Mammary epithelial cell (primary cell): ENCODE measurements at regions of chr12 and their contacts with region 1.

Region 1: DNA sequence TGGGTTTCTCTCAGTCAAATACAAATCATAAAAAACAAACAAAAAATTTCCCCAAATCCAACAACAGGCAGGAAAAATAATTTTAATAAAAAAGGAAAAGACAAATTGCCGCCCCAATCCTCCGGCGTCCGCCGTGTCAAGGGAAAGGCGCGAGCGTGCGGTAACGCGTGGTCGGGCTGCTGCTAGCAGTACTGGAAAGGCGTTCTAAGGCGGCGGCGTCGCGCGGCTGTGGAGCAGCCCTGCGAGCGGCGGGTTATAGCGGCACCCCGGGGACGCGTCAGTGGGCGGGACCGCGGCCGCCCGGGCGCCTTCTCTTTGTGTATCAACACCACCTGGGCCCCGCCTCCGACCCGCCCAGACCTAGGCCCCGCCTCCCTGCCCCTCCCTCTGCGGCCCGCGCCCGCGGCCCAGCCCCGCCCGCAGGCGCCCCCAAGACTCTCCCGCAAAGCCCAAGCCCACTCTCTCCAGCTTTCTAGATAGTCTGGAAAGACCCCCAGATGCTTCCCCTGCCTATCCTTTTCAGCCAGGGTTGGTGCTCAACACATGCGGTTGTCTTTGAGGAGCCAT is at the start of gene SLC38A2:
- DNase-seq: peak; percentile 91
- H3K4me3 ChIP-seq: peak within 1 kb of the TSS; percentile 91 to 95 (median 92)
- H3K27ac ChIP-seq: peak within 1 kb of the TSS; percentile 98
- H3K4me1 ChIP-seq: peaks cover 27% of the 10 kb centered on the region
- H3K27me3 ChIP-seq: no peaks in the 10 kb centered on the region
- CTCF ChIP-seq: no peak
- total RNA-seq, gene SLC38A2: 774 to 995 TPM

Region 2: DNA sequence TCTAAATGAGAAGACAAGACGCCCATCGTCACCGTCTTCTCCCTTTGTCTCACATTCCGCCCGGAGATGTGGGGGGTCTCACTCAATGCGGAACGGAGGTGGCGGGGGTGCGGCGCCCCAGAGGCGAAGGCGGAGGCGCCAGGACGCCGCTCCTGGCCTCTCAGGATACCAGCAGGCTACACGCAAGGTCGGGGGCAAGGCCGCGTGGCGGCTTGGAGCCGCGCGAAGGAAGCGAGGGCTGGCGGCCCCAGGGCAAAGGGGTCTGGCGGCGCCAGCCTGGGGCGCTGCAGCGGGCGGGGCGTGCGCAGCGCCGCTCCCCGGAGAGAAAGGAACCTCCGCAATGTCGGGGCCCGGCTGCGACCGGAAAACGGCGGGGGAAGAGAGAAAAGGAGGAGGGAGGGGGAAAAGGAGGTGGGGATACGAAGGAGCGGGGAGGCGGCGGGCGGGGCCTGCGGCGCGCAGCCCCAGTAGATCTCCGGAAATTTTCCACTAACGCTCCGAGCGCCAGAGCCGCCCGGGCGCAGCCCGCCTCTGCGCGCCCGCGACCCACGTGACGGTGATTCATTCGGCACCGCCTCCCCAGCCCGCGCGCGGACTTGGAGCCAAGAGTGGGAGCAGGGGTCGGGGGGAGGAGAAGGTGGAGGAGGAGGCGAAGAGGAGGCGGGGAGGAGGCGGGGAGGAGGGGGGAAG is 10.5 kb after region 1 on chr12:
- CTCF ChIA-PET with region 1: no interaction called
- dilution Hi-C with region 1: no loop called
- in situ Hi-C with region 1: no loop called
- intact Hi-C with region 1: loop called (anchors 1 kb)
- DNase-seq: peak; percentile 95
- H3K4me3 ChIP-seq: peak overlapping the region; percentile 60 to 68 (median 64)
- H3K27ac ChIP-seq: peak overlapping the region; percentile 96
- H3K4me1 ChIP-seq: peaks cover 50% of the 10 kb centered on the region
- H3K27me3 ChIP-seq: no peaks in the 10 kb centered on the region
- CTCF ChIP-seq: peak in 1 of 2 donors; percentile 8

Region 3: GRCh38 chr12:46492471-46493351 is 120.1 kb after region 1 on chr12:
- CTCF ChIA-PET with region 1: no interaction called
- dilution Hi-C with region 1: no loop called
- in situ Hi-C with region 1: no loop called
- intact Hi-C with region 1: loop called (anchors 1 kb)
- DNase-seq: peak; percentile 85
- H3K4me3 ChIP-seq: no peak overlapping the region
- H3K27ac ChIP-seq: peak overlapping the region; percentile 94
- H3K4me1 ChIP-seq: peaks cover 56% of the 10 kb centered on the region
- H3K27me3 ChIP-seq: no peaks in the 10 kb centered on the region
- CTCF ChIP-seq: peak; percentile 12 to 17

Region 4: GRCh38 chr12:46556105-46556559 is 183.5 kb after region 1 on chr12:
- CTCF ChIA-PET with region 1: no interaction called
- dilution Hi-C with region 1: no loop called
- in situ Hi-C with region 1: loop called in 1 of 2 experiments (anchors 25 kb)
- intact Hi-C with region 1: loop called (anchors 1 kb)
- DNase-seq: peak; percentile 89
- H3K4me3 ChIP-seq: no peak overlapping the region
- H3K27ac ChIP-seq: peak overlapping the region; percentile 99
- H3K4me1 ChIP-seq: peaks cover 84% of the 10 kb centered on the region
- H3K27me3 ChIP-seq: no peaks in the 10 kb centered on the region
- CTCF ChIP-seq: no peak